Breast epithelium (tissue), 4 donors: ENCODE measurements at regions of chr16 and their contacts with region 1.

Region 1: DNA sequence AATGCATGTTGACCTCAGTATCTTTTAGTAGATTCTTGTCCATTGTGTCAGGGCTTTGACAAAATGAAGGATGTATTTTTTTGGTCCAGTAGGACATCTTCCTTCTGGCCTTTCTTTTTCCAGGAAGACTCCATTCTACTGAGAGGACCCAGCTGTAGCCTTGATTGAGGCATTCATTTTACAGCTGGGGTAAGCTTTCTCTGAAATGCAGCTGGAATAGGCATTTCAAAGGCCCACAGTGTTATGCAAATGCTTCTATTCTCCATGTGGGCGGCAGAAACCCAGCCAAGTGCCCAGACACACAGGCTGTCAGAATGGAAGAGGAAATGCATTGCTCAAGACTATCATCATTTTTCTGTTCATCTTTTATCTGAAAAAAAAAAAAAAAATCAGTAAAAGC is 629.0 kb upstream of the CDH8 start:
- DNase-seq: no peak
- H3K4me3 ChIP-seq: no peak overlapping the region
- H3K27ac ChIP-seq: no peak overlapping the region
- H3K4me1 ChIP-seq: no peaks in the 10 kb centered on the region
- H3K27me3 ChIP-seq: no peaks in the 10 kb centered on the region
- CTCF ChIP-seq: no peak
- POLR2A ChIP-seq: no peak

Region 2: DNA sequence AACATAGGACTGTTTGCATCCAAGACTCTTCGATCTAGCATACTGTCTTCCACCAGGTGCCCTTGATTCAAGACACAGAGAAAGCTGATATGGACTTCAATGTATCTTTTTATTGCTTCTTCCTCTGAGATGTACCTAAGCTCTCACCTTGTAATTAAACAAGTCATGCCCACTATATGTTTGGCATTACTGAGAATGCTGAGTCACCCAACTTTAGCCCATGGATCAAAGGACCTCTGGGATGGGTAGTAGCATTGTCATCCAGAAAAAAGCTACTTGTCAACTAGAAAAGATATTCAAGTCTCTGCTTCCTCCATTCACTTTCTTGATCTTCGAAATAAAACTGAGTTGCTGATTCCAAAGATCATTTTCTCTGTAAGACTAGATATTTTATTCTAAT is 666.8 kb before region 1 on chr16:
- intact Hi-C with region 1: loop called (anchors 5 kb)
- DNase-seq: no peak
- H3K4me3 ChIP-seq: no peak overlapping the region
- H3K27ac ChIP-seq: no peak overlapping the region
- H3K4me1 ChIP-seq: no peaks in the 10 kb centered on the region
- H3K27me3 ChIP-seq: no peaks in the 10 kb centered on the region
- CTCF ChIP-seq: no peak
- POLR2A ChIP-seq: no peak

Region 3: GRCh38 chr16:62280506-62280905 is 384.8 kb before region 1 on chr16:
- intact Hi-C with region 1: loop called (anchors 5 kb)
- DNase-seq: no peak
- H3K4me3 ChIP-seq: no peak overlapping the region
- H3K27ac ChIP-seq: no peak overlapping the region
- H3K4me1 ChIP-seq: no peaks in the 10 kb centered on the region
- H3K27me3 ChIP-seq: no peaks in the 10 kb centered on the region
- CTCF ChIP-seq: no peak
- POLR2A ChIP-seq: no peak

Region 4: GRCh38 chr16:62676306-62676705 is 11.0 kb after region 1 on chr16:
- intact Hi-C with region 1: loop called (anchors 1 kb)
- DNase-seq: no peak
- H3K4me3 ChIP-seq: no peak overlapping the region
- H3K27ac ChIP-seq: no peak overlapping the region
- H3K4me1 ChIP-seq: no peaks in the 10 kb centered on the region
- H3K27me3 ChIP-seq: no peaks in the 10 kb centered on the region
- CTCF ChIP-seq: no peak
- POLR2A ChIP-seq: no peak

Region 5: GRCh38 chr16:63129411-63130125 is 464.3 kb after region 1 on chr16:
- intact Hi-C with region 1: no loop called
- DNase-seq: no peak
- H3K4me3 ChIP-seq: no peak overlapping the region
- H3K27ac ChIP-seq: no peak overlapping the region
- H3K4me1 ChIP-seq: no peaks in the 10 kb centered on the region
- H3K27me3 ChIP-seq: no peaks in the 10 kb centered on the region
- CTCF ChIP-seq: no peak
- POLR2A ChIP-seq: no peak